ENCODE measurements at regions of chr19 and their contacts with region 1.

Region 1: DNA sequence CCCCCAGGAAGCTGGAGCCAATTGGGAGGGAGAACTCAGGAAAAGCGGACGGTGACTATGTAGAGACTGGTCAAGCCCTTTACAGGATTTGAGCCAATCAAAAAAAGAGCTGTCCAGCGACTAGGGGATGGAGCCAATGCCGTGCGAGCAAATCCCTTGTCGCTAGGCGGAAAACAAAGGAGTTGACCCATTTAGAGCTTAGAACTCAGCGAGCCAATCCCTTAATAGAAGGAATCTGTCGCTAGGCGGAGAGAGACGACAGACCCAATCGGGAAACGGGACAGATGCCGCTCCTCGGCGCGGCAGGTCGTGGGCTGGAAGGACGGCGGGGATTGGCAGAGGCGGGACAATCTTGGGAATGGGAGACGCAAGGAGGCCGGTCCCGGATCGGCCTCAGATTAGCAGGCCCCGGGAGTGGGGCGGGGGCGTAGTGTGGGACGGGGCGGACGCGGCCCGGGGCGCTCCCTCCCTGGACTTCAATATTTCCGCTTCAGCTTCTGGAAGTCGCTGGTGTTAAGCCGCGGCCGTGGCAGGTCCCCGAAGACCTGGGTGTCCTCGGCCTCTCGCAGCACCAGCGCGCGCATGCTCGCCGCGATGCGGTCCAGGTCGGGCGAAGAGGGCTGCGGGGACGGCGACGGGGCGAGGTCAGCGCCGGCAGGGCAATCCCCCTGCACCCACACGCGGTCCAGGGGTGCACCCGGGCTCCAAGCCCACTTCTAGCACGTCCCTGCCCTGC is 2.2 kb upstream of the PNKP start:
- DNase-seq: peak; percentile 98 to 99
- H3K4me3 ChIP-seq: peak overlapping the region; percentile 45 to 70 (median 56)
- H3K27ac ChIP-seq: peak overlapping the region; percentile 77
- H3K4me1 ChIP-seq: peaks cover 0 to 12% (median 5%) of the 10 kb centered on the region in 4 experiments; a peak in 5 of 7 replicates
- H3K27me3 ChIP-seq: no peaks in the 10 kb centered on the region
- CTCF ChIP-seq: no peak
- EP300 ChIP-seq: no peak
- POLR2A ChIP-seq: peak in 1 of 2 experiments; percentile 87; a peak in 2 of 3 replicates
- RAD21 ChIP-seq: no peak

Region 2: DNA sequence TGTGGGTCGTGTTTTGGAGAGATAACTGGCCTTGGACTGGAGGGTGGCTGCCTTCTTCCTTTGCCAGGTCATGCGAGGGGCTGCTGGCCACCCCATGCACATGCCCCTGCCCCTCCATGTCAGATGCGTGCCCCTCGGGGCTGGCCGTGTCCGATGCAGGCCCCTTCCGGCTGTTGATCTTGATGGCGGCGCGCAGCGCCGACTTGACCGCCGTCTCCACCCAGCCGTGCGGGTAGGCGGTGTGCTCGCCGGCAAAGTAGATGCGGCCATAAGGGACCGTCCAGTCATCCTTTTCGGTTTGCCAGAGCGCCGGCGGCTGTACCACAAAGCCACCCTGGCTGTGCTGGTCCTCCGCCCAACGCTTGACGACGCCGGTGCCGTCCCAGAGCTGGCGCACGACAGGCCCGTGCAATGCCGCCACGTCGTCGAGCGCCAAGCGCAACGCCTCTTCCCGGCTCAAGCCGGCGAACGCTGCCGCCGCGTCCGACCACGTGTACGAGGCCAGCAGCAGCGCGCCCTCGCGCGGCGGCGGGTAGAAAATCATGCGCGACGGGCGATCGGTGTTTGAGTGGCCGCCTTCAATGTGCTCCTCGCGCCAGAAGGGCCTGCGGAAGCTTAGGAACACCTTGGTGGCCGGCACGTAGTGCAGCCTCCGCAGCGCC is 20.2 kb after region 1 on chr19:
- CTCF ChIA-PET with region 1: interaction called, 4 read pairs
- POLR2A ChIA-PET with region 1: interaction called, 55 read pairs
- DNase-seq: peak; percentile 88 to 94
- H3K4me3 ChIP-seq: peak overlapping the region; percentile 35 to 61 (median 42); a peak in 7 of 8 replicates
- H3K27ac ChIP-seq: no peak overlapping the region
- H3K4me1 ChIP-seq: peaks cover 0 to 10% (median 8%) of the 10 kb centered on the region in 4 experiments; a peak in 5 of 7 replicates
- H3K27me3 ChIP-seq: peaks cover 0 to 11% (median 6%) of the 10 kb centered on the region in 4 experiments; a peak in 4 of 7 replicates
- CTCF ChIP-seq: peak; percentile 77 to 94 (median 87)
- EP300 ChIP-seq: peak in 1 of 2 experiments; percentile 47; a peak in 1 of 3 replicates
- POLR2A ChIP-seq: no peak
- RAD21 ChIP-seq: peak; percentile 18 to 45; a peak in 3 of 4 replicates

Measured in H1 (cell line).